A673 (cell line): ENCODE measurements at regions of chr2 and their contacts with region 1.

Region 1: GRCh38 chr2:33929467-33929866 is 330.4 kb upstream of the FAM98A start:
- DNase-seq: no peak
- H3K4me3 ChIP-seq: no peak overlapping the region
- H3K27ac ChIP-seq: peak overlapping the region; percentile 73
- H3K4me1 ChIP-seq: peaks cover 33% of the 10 kb centered on the region
- H3K27me3 ChIP-seq: no peaks in the 10 kb centered on the region
- CTCF ChIP-seq: no peak

Region 2: DNA sequence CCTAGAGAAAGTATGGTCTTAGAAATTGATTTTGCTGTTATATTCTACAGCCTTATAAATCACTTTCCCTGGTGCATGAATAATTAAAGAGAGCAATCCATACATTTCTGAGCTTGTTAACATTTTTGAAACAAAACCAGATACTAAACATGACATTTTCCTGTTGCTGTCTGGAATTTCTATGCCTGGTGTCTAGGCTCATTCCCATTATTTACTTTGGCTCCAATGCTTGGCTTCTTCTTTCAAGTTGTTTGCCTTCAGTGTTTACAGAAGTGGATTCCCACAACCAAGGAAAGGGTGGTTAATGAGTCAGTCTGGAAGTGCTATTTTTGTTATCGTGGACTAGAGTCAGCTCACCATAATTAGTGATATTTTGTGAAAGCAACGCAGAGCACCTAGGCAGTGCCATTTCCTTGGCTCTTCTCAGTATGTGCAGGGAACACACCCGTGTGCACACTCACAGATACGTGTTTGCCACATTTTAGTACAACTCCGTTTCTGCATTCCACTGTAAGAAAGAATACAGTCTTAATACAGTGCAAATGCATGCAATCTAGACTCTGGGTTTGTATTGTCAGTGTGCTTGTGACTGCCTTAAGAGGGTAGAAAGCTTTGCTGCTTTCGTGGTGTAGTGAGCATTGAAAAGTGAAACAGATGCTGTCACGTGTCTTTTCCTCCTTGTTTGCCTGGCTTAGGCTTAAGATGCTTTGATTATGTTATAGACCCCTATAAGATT is 638.0 kb before region 1 on chr2:
- CTCF ChIA-PET with region 1: no interaction called
- POLR2A ChIA-PET with region 1: no interaction called
- intact Hi-C with region 1: no loop called
- DNase-seq: no peak
- H3K4me3 ChIP-seq: no peak overlapping the region
- H3K27ac ChIP-seq: no peak overlapping the region
- H3K4me1 ChIP-seq: no peaks in the 10 kb centered on the region
- H3K27me3 ChIP-seq: no peaks in the 10 kb centered on the region
- CTCF ChIP-seq: no peak

Region 3: GRCh38 chr2:34808426-34808825 is 879.0 kb after region 1 on chr2:
- CTCF ChIA-PET with region 1: no interaction called
- POLR2A ChIA-PET with region 1: no interaction called
- intact Hi-C with region 1: no loop called
- DNase-seq: no peak
- H3K4me3 ChIP-seq: no peak overlapping the region
- H3K27ac ChIP-seq: no peak overlapping the region
- H3K4me1 ChIP-seq: no peaks in the 10 kb centered on the region
- H3K27me3 ChIP-seq: no peaks in the 10 kb centered on the region
- CTCF ChIP-seq: no peak

Region 4: DNA sequence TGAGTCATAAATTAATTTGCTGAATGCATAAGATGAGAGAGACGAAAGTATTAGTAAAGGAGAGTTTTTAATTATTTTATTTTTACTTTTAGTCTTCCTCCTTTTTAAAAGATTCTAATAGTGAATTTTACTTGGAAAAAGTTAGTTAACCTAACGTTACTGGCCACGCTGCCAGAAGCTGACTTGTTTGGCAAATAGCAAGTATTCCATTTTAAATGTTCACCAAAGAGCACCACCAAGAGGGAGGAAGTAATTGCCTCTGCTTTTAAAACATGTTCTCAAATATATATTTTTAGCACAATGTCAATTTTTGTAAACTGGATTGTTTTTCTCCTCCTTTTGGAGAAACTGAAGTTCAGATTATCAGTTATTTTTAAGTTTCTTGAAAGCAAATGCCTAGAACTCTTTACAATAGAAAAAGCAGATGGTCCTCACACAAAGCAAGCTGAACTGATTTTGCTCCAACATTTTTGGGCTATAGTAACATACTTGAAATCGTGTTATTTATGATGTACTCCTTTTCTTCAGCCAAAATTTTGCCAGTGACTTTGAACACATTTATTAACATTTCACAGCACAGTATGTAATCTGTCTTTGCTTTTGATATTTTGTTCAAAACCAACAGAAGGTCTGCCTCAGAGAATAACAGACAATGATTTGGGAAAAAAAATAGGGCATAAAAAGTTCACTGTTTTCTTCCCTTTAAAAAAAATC is 980.7 kb after region 1 on chr2:
- CTCF ChIA-PET with region 1: no interaction called
- POLR2A ChIA-PET with region 1: no interaction called
- intact Hi-C with region 1: loop called (anchors 10 kb)
- DNase-seq: no peak
- H3K4me3 ChIP-seq: no peak overlapping the region
- H3K27ac ChIP-seq: no peak overlapping the region
- H3K4me1 ChIP-seq: no peaks in the 10 kb centered on the region
- H3K27me3 ChIP-seq: no peaks in the 10 kb centered on the region
- CTCF ChIP-seq: no peak